ENCODE measurements at regions of chr5 and their contacts with region 1.

Region 1: DNA sequence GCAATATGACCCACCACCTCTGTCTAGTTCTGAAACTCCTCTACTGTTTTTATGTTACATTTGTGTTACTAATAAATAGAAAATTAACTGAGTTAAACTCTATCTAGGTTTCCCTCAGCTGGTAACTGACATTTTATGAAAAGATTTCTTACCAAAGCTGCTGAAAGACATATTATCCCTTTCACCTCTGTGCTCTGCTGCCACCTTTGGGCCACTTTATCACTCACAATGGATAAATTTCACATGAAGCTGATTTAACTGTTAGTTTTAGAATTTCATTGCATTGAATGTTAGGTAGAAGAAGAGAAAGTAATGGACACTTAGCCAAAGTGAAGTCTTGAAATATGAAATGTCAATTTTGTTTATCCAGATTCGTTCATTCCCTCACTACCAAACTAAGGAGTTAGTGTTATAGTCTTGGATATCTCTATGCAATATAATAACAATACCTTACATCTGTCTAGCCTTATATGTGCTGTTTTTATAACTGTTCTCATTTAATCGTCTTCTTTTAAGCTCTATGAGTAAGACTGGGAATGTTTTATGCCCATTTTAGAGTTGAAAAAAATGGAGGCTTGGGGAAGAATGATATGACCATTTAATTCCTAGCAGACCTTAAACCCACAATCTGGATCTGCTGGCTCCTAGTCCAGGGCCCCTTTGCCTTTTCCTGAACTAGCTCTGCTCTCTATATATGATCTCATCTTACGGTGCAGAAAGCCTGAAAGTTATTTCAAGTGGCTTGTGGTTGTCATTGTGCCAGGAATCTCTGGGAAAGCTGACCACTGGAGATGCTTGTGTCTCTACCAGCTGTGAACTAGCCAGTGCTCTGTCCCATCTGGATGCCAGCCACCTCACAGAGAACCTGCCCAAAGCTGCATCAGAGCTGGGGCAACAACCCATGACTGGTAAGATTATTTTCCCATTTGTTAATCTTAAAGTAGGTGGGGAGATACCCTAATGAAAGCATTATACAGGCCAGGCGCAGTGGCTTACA is 97.1 kb downstream of the GOLPH3 start:
- DNase-seq: peak in 34 of 42 donors; percentile 32 to 88 (median 64)

Region 2: GRCh38 chr5:31825518-31826068 is 251.4 kb before region 1 on chr5:
- intact Hi-C with region 1: loop called (anchors 5 kb)
- DNase-seq: peak in 38 of 42 donors; percentile 30 to 87 (median 66)

Region 3: DNA sequence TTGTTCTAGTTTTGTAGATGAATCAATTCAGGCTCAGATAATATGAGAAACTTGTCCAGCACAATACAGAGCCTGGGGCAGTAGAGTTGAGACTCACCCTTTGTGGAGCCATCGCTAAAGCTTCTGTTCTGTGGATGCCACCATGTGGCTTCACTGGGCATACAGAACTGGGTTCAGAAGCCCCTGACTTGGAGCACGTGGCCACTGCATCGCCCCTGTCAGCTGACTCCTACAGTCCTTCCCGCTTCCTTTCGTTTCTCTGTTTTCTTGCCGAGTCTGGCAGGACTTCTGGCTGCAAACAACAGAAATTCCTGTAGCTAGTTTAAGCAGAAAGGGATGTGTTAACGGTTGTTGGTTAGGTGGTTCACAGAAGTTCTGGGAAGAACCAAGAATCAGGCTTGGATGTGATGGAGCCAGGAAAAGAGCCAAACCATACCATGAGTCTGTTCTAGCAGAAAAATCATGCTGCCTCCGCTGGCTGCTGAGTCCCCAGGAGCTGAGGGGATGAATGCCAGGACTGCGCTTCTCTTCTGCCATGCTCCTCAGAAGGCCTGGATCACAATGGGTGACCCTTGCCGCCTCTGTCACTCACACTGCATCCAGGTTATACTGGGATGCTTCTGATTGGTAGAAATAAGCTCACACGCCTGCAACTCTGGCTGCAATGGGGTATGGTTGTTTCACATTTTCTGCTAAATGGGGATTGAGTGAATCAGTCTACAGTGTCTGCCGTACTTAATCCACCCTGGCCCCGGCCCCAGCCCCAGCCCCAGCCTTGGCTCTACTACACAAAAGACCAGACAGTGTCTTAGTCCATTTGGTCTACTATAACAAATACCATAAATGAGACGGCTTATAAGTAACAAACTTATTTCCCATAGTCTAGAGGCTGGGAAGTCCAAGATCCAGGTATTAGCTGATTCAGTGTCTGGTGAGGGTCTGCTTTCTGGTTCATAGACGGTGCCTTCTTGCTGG is 165.4 kb before region 1 on chr5:
- intact Hi-C with region 1: loop called (anchors 10 kb)
- DNase-seq: peak; percentile 44 to 94 (median 82)

Region 4: DNA sequence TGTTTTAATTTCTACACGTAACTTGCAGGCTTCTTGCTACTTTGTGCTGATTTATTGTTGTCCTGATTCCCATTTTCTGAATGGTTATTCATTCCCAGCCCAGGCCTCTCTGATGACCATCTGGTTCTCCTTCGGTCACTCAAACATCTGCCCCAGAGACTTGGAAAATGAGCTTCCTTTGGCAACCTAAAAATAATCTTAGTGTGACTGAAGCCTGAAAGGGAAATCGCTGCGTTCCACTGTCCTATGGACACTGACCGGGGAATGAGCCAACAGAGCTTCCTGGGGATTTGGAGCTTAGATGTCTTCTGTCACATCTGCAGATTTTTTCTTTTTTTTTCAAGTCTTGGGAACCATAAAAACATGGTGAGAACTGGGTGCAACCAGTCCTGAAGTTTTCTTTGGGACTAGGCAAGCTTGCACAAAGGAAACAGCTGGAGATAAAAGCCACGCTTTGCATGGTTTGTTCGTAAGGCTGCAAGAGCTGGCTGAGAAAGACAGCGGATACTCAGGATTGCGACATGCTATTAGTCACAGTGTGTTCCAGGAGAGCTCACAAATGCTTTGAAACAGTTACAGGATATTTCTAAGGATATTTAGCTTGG is 49.2 kb before region 1 on chr5:
- intact Hi-C with region 1: loop called (anchors 10 kb)
- DNase-seq: peak in 24 of 42 donors; percentile 25 to 79 (median 42)

Region 5: DNA sequence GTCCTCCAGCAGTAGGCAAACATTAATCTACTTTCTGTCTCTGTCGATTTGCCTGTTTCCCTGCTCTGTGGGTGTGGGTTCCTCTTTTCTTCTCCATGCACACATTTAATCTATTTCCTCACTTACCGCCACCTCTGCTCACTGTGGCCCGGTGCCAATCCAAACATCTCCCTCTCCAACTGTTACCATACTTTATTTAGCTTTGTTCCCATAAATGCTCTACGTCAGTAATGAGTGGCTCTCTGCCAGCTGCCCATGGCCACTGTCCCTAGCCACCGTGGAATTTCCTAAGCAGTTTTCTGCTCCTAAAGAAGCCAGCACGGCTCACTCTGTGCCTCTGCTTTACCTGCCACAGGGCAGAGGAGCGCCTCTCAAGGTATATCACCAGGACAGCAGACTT is 116.6 kb after region 1 on chr5:
- intact Hi-C with region 1: no loop called
- DNase-seq: peak in 21 of 42 donors; percentile 8 to 46 (median 23)

Region 6: DNA sequence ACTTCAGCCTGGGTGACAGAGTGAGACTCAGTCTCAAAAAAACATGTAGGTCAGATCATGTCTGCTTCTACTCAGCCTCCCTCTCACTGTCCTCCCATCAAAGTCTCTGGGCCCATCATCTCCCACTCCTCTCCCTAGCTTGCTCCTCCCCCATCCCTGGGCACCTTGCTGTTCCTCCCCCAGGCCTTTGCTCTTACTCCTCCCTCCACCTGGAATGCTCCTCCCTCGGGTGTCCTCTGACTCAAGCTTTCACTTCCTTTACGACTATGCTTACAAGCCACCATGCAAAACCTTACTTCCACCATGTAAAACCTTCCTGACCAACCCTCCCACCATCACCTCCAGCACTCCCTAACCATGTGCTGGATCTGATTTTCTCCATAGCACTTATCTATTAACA is 184.2 kb after region 1 on chr5:
- intact Hi-C with region 1: no loop called
- DNase-seq: no peak

Measured in head of caudate nucleus (tissue), 42 donors.